K562 (cell line): ENCODE measurements at regions of chr7 and their contacts with region 1.

Region 1: GRCh38 chr7:129389829-129390228 is 44.4 kb upstream of the STRIP2 start:
- DNase-seq: no peak
- ATAC-seq: peak; percentile 51; the same call in 1 of the 3 replicates
- H3K4me3 ChIP-seq: no peak overlapping the region
- H3K27ac ChIP-seq: no peak overlapping the region
- H3K4me1 ChIP-seq: no peaks in the 10 kb centered on the region
- H3K27me3 ChIP-seq: no peaks in the 10 kb centered on the region
- CTCF ChIP-seq: peak in 2 of 3 experiments; percentile 18 to 22; a peak in 2 of 6 replicates
- EP300 ChIP-seq: no peak
- POLR2A ChIP-seq: no peak
- RAD21 ChIP-seq: no peak

Region 2: DNA sequence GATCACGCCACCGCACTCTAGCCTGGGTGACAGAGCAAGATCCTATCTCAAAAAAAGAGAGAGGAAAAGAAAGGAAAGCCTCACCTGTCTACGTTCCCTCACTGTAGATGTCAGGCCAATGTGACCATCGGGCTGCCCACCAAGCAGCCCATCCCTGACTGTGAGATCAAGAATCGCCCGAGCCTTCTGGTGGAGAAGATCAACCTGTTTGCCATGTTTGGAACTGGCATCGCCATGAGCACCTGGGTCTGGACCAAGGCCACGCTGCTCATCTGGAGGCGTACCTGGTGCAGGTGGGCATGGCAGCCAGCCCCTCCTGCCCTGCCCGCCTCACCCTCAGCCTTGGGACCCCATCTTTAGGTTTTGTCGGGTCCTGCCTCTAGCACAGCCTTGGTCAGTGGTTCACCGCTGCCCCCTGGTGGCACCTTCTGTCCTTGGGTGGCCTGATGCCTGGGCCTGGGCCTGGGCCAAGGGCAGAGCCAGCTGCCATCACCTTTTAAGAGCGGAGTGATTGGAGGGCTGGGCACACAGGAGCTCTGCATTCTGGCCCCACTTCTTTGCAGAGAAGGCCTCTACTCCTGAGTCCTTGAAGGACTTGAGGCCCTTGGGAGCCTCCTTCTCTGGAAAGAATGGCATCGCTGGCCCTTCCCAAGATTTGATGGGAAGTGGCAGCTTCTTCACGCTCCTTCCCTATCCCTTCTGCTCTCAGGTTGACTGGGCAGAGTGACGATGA is 179.4 kb before region 1 on chr7:
- CTCF ChIA-PET with region 1: no interaction called
- POLR2A ChIA-PET with region 1: no interaction called
- in situ Hi-C with region 1: no loop called
- intact Hi-C with region 1: no loop called
- DNase-seq: peak; percentile 82 to 88 (median 86)
- ATAC-seq: peak; percentile 90
- H3K4me3 ChIP-seq: no peak overlapping the region
- H3K27ac ChIP-seq: no peak overlapping the region
- H3K4me1 ChIP-seq: peaks cover 5 to 7% of the 10 kb centered on the region in 2 experiments; a peak in 3 of 5 replicates
- H3K27me3 ChIP-seq: peaks cover 52 to 75% of the 10 kb centered on the region in 2 experiments
- CTCF ChIP-seq: peak; percentile 93 to 94 (median 94)
- EP300 ChIP-seq: no peak
- POLR2A ChIP-seq: no peak
- RAD21 ChIP-seq: peak; percentile 84 to 94

Region 3: DNA sequence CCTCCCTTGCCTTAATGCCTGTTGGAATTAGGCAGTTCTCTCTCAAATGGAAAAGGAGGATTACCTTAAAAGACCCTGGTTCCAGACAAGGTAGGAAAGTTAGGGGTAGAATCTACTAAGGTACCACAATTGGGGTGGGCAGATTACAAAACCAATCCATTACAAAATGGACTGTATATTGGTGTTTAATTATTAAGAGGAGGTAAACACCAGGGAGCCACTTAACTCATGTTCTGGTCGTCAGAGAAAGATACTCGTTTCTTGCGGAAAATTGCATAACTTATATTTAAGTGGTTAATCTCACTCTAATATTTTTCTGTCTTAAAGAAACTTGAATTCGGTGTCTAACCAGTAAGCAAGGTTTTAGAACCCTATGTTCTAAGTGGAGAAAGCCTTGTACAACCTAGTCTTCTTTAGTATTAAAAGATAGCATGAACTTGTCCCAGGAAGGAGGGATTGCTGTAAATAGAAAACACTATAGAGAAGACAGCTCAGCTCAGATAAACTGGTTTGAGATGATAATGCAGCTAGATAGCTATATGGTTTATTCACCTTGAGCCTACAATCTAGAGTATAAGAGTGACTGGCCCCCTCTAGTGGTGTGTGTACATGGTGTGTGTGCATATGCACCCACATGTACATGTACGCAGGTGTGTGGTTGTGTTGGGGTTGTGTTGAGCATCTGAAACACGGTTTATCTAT is 13.6 kb before region 1 on chr7:
- CTCF ChIA-PET with region 1: no interaction called
- POLR2A ChIA-PET with region 1: interaction called, 12 read pairs
- in situ Hi-C with region 1: no loop called
- intact Hi-C with region 1: no loop called
- DNase-seq: peak; percentile 70 to 80 (median 72)
- ATAC-seq: peak; percentile 98
- H3K4me3 ChIP-seq: no peak overlapping the region
- H3K27ac ChIP-seq: no peak overlapping the region
- H3K4me1 ChIP-seq: peaks cover 0 to 5% of the 10 kb centered on the region in 2 experiments; a peak in 1 of 5 replicates
- H3K27me3 ChIP-seq: no peaks in the 10 kb centered on the region
- CTCF ChIP-seq: peak; percentile 78 to 91 (median 86)
- EP300 ChIP-seq: no peak
- POLR2A ChIP-seq: no peak
- RAD21 ChIP-seq: peak; percentile 50 to 77; a peak in 3 of 4 replicates